Activated naive CD4-positive, alpha-beta T cell treated with anti-CD3 and anti-CD28 coated beads for 36 hours (primary cell): ENCODE measurements at regions of chr10 and their contacts with region 1.

Region 1: DNA sequence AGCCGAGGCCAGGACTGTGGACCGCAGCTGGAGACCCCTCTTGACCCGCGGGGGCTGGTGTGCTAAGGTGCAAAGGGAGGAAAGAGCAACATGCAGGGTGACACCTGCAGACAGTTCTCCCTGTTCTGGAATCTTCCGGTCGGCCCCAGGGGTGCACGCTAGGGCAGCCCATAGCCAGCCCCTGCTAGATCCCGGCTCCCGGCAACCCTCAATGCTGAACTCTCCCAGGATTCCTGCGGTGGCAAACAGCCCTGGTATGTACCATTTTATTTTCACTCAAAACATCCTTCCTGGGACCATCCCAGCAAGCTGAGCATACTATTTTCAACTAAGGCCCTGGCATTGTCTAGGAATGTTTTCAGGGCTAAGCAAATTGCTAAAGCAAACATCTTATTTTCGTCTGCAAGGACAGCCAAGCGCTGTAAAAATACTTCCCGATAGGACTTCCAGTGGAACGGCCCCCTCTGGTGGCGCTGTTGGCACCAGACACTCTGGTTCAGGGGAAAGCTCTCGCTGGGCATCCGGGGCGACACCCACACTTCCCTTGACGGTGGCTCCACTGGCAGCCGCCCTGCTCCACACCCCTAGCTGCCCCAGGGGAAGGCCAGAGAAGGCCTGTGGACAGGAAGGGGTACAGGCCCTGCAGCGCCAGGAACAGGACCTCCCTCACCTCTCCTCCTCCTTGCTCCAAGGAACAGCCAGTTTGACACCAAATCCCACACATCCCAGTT is 99.4 kb downstream of the CTBP2 start:
- DNase-seq: peak; percentile 68
- H3K4me3 Mint-ChIP-seq: no peak overlapping the region
- H3K27ac Mint-ChIP-seq: no peak overlapping the region
- H3K4me1 Mint-ChIP-seq: peaks cover 15% of the 10 kb centered on the region
- H3K27me3 Mint-ChIP-seq: peaks cover 13% of the 10 kb centered on the region

Region 2: DNA sequence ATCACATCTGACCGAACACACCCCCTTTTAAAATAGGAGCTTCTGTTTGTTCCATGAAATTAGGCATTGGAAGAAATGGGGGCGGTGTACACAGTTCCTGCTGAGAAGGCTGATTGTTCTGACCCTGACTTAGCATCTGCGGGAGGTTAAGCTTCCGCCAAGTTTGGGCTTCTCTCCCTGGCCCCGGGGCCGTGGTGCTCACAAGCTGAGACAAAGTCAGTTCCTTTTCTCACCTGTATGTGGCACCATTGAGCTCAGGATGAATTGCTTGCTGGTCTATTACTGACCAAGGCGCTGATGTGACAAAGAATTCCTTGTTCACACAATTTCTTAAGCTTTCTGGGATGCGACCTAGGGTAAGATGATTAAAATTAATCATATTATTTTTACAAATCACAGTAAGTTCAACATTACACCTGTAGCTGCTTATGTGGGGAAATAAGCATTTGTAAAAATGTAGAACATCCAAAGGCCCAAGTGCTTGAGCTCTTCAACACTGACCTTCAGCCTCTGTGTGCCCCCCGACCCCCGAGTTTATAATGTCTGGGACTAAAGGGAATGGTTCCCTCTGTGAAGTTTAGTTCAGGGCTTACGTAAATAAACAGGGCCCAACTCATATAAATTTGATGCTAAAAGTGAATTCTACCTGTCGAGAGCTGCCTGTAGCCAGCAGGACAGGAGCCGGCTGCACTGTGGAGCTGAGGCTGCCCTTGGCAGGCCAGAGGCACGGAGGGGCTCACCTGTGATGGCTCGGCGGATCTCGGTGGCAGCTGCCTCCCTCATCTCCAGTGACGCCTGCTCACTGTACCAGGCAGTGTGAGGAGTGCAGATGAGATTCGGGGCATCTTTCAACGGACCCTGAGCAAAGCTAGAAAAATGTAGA is 68.3 kb before region 1 on chr10:
- CTCF ChIA-PET with region 1: no interaction called
- intact Hi-C with region 1: loop called (anchors 5 kb)
- DNase-seq: peak; percentile 49
- H3K4me3 Mint-ChIP-seq: no peak overlapping the region
- H3K27ac Mint-ChIP-seq: no peak overlapping the region
- H3K4me1 Mint-ChIP-seq: peaks cover 8% of the 10 kb centered on the region
- H3K27me3 Mint-ChIP-seq: no peaks in the 10 kb centered on the region